Dorsolateral prefrontal cortex (tissue), 120 donors: ENCODE measurements at regions of chr4 and their contacts with region 1.

Region 1: GRCh38 chr4:156968479-156968984 is 3.1 kb downstream of the PDGFC start:
- DNase-seq: peak in 6 of 10 donors; percentile 25 to 77 (median 50)
- H3K4me3 ChIP-seq: peak overlapping the region in 45 of 59 donors; percentile 1 to 88 (median 77)
- H3K27ac ChIP-seq: peak overlapping the region in 37 of 59 donors; percentile 7 to 95 (median 80)
- H3K27me3 ChIP-seq: no peaks in the 10 kb centered on the region
- CTCF ChIP-seq: peak; percentile 60 to 94 (median 85)

Region 2: DNA sequence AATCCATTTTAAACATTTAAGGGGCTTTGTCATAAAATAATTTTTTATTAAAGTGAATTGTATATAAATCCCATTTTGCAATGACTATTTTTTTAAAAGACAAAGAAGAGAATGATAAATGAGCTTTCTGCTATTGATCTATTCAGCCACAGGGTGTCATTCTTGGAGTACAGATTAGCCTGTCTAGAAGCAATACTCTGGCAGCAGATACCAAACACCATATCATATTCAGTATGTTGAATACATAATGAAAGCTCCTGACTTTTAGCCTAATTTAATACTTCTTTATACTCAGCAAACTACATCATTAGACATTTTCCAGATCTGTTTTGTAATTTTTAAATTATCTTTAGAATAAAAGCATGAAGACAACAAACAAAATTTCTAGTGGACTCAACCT is 493.2 kb before region 1 on chr4:
- intact Hi-C with region 1: loop called in 1 of 2 experiments (anchors 10 kb)
- DNase-seq: no peak
- H3K4me3 ChIP-seq: no peak overlapping the region
- H3K27ac ChIP-seq: no peak overlapping the region
- H3K27me3 ChIP-seq: no peaks in the 10 kb centered on the region
- CTCF ChIP-seq: peak in 50 of 56 donors; percentile 20 to 73 (median 47)

Region 3: DNA sequence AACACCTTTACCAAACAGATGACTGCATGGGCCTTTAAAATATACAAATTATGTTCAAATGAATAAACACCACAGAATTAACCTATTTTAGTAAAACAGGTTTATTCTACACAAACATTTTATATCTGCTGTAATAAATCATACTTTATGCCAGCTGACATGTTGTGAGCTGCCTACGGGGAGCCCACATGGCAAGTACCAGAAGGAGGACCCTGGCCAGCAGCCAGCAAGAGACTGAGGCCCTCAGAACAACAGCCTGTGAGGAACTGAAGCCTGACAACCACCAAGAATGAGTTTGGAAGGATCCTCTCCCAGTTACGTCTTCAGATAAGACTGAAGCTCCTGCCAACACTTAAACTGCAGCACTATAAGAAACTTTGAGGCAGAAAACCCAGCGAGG is 373.9 kb before region 1 on chr4:
- intact Hi-C with region 1: loop called (anchors 2 to 5 kb)
- DNase-seq: peak; percentile 26 to 77 (median 48)
- H3K4me3 ChIP-seq: no peak overlapping the region
- H3K27ac ChIP-seq: peak overlapping the region in 6 of 59 donors; percentile 5 to 67 (median 24)
- H3K27me3 ChIP-seq: no peaks in the 10 kb centered on the region
- CTCF ChIP-seq: no peak

Region 4: DNA sequence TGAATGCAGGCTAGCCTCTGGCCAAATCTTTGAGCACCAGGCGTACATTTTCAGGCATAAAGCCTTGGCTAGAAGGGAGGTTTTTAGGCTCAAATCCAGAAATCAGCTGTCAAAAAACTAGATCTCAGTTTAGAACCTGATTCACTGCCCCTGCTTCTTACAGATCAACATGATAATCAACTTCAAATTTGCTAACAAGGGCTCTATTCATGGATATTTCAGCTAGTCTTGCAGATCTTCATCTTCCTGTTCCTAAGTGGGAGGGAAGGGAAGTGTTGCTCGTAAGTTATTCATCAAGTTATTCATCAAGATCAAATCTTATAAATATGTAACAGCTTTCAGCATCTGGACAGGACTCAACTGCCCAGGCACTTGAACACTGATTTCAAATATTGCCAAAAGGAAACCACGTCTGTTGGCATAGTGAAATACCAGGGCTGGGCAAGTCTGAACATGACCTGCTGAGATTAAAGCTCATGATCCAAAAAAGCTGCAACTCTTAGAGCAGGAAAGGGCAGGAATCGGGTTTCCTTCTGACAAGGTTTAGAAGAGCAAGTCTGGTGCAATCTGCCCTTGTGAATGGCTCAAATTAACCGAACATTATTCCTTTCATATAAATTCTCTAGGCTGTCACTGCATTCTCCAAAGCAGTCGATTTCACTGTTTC is 197.2 kb before region 1 on chr4:
- intact Hi-C with region 1: loop called in 1 of 2 experiments (anchors 10 kb)
- DNase-seq: no peak
- H3K4me3 ChIP-seq: peak overlapping the region in 58 of 59 donors; percentile 11 to 64 (median 42)
- H3K27ac ChIP-seq: peak overlapping the region in 58 of 59 donors; percentile 9 to 88 (median 76)
- H3K27me3 ChIP-seq: no peaks in the 10 kb centered on the region
- CTCF ChIP-seq: no peak

Region 5: GRCh38 chr4:157045507-157046127 is 77.1 kb after region 1 on chr4:
- intact Hi-C with region 1: loop called in 1 of 2 experiments (anchors 10 kb)
- DNase-seq: peak in 1 of 10 donors; percentile 16
- H3K4me3 ChIP-seq: no peak overlapping the region
- H3K27ac ChIP-seq: no peak overlapping the region
- H3K27me3 ChIP-seq: no peaks in the 10 kb centered on the region
- CTCF ChIP-seq: peak in 55 of 56 donors; percentile 49 to 83 (median 70)

Region 6: DNA sequence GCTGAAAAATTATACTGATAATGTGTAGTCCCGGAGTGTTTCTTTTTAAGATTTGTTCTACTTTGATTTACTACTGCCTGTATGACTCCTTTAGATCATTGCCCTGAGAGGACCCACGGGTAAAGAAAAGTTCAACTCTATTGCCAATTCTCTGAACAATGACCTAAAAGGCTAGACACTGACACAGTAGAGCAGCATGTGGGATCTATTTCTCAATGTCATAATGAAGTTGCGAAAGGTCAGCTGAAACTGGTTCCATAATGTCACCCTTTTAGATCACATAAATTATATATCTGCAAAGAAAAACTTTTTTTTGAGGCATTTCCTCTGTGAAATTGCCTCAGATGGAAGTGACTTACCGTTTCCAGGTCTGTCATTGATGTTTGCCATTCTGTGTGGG is 174.8 kb after region 1 on chr4:
- intact Hi-C with region 1: no loop called
- DNase-seq: no peak
- H3K4me3 ChIP-seq: no peak overlapping the region
- H3K27ac ChIP-seq: no peak overlapping the region
- H3K27me3 ChIP-seq: no peaks in the 10 kb centered on the region
- CTCF ChIP-seq: no peak